ENCODE measurements at regions of chr1 and their contacts with region 1.

Region 1: GRCh38 chr1:70528590-70529333 is 117.7 kb downstream of the CTH start:
- ATAC-seq: peak; percentile 43 to 99 (median 74)
- H3K4me3 ChIP-seq: no peak overlapping the region
- H3K27ac ChIP-seq: no peak overlapping the region
- H3K4me1 ChIP-seq: no peaks in the 10 kb centered on the region

Region 2: GRCh38 chr1:70896224-70896623 is 367.5 kb after region 1 on chr1:
- in situ Hi-C with region 1: loop called in 1 of 9 experiments (anchors 25 kb)
- ATAC-seq: peak in 3 of 8 experiments; percentile 19 to 36 (median 19)
- H3K4me3 ChIP-seq: no peak overlapping the region
- H3K27ac ChIP-seq: no peak overlapping the region
- H3K4me1 ChIP-seq: peaks cover 2 to 8% of the 10 kb centered on the region in 2 donors

Measured in motor neuron (in vitro differentiated cells).